Naive thymus-derived CD4-positive, alpha-beta T cell (primary cell): ENCODE measurements at regions of chr17 and their contacts with region 1.

Region 1: DNA sequence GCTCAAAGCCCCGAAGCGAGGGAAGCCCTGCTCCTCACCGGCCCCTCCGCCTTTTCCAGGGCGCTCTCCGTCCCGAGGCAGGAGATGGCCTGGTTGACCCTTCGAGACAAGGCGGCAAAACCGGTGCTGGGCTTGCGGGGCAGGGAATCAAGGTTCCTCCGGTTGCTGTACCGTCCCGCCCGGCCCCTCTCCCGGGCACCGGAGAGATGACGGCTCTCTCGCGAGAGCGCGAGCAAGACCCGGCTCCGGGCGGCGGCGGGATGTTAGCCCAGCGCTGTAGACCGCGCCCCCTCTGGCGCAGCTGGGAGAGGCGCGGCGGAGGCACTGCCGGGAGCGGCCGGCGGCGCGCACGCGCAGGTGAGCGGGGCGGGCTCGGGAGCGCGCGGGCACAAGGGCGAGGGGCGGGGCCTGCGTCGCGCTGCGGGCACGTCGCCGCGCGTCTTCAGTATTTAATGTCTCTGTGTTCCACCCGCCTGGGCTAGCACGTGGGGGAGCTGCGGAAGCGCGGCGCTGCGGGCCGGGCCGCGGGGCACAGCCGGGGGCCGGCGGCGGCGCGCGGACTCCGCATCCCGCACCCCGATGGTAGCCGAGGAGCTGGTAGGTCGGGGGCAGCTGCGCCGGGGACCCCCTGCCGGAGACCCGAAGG is at the start of gene AKAP1:
- DNase-seq: peak; percentile 91 to 98 (median 97)
- ATAC-seq: peak; percentile 95
- H3K4me3 ChIP-seq: peak within 1 kb of the TSS; percentile 96
- H3K4me3 Mint-ChIP-seq: peak within 1 kb of the TSS; percentile 89 to 95 (median 92)
- H3K27ac ChIP-seq: peak within 1 kb of the TSS; percentile 91
- H3K27ac Mint-ChIP-seq: peak within 1 kb of the TSS; percentile 86 to 95 (median 93)
- H3K4me1 ChIP-seq: peaks cover 9 to 12% of the 10 kb centered on the region in 2 donors
- H3K4me1 Mint-ChIP-seq: peaks cover 27 to 43% (median 34%) of the 10 kb centered on the region in 7 donors
- H3K27me3 ChIP-seq: no peaks in the 10 kb centered on the region
- H3K27me3 Mint-ChIP-seq: peaks cover 0 to 12% (median 0%) of the 10 kb centered on the region in 5 donors
- total RNA-seq, gene AKAP1: 22.2 to 35.8 (median 34.3) TPM

Region 2: DNA sequence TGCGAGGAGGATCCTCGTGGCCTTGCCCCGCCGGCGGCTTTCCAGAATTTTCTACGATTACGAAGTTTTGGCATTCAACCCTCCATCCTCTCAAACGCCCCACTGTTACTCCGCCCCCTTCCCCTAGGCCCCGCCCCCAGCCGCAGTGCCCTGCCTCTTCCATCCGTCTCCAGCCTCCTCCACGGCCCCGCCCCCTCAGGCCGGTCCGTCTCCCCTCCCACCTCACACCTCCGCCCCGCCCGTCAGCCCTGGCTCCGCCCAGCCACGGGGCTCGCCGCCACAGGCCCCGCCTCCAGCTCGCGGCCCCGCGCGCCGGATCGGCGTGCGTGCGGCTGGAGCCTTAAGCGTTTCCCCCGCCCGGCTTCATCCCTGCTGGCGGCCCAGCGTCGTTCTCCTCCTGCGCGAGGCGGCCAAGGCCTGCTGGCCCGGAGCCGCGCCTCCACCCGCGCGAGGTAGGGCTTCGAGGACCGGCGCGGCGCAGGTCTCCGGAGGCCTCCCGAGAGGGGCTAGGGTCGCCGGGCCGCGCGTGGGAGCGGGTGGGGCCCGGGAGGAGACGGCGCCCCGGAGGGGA is 251.0 kb before region 1 on chr17 and contains the starts of genes C17orf67 and DGKE:
- CTCF ChIA-PET with region 1: no interaction called
- POLR2A ChIA-PET with region 1: no interaction called
- intact Hi-C with region 1: loop called (anchors 1 kb)
- DNase-seq: peak; percentile 95 to 100 (median 98)
- ATAC-seq: peak; percentile 97
- H3K4me3 ChIP-seq: peak within 1 kb of the TSS; percentile 91
- H3K4me3 Mint-ChIP-seq: peak within 1 kb of the TSS; percentile 91 to 98 (median 95)
- H3K27ac ChIP-seq: peak within 1 kb of the TSS; percentile 85
- H3K27ac Mint-ChIP-seq: peak within 1 kb of the TSS; percentile 83 to 95 (median 93)
- H3K4me1 ChIP-seq: peaks cover 41 to 42% of the 10 kb centered on the region in 2 donors
- H3K4me1 Mint-ChIP-seq: peaks cover 34 to 74% (median 62%) of the 10 kb centered on the region in 7 donors
- H3K27me3 ChIP-seq: no peaks in the 10 kb centered on the region
- H3K27me3 Mint-ChIP-seq: no peaks in the 10 kb centered on the region
- total RNA-seq, gene C17orf67: 3.6 to 9.1 (median 5.4) TPM
- total RNA-seq, gene DGKE: 23.7 to 39.2 (median 35.6) TPM

Region 3: GRCh38 chr17:56977673-56978395 is 107.1 kb before region 1 on chr17 and contains the start of gene SCPEP1:
- CTCF ChIA-PET with region 1: no interaction called
- POLR2A ChIA-PET with region 1: no interaction called
- intact Hi-C with region 1: loop called (anchors 1 kb)
- DNase-seq: peak; percentile 65 to 82 (median 76)
- ATAC-seq: peak; percentile 99
- H3K4me3 ChIP-seq: peak within 1 kb of the TSS; percentile 92
- H3K4me3 Mint-ChIP-seq: peak within 1 kb of the TSS; percentile 85 to 96 (median 93)
- H3K27ac ChIP-seq: peak within 1 kb of the TSS; percentile 63
- H3K27ac Mint-ChIP-seq: peak within 1 kb of the TSS; percentile 70 to 98 (median 86)
- H3K4me1 ChIP-seq: peaks cover 10 to 12% of the 10 kb centered on the region in 2 donors
- H3K4me1 Mint-ChIP-seq: peaks cover 11 to 33% (median 24%) of the 10 kb centered on the region in 7 donors
- H3K27me3 ChIP-seq: no peaks in the 10 kb centered on the region
- H3K27me3 Mint-ChIP-seq: peaks cover 0 to 32% (median 0%) of the 10 kb centered on the region in 5 donors
- total RNA-seq, gene SCPEP1: 8.4 to 81.6 (median 27.1) TPM

Region 4: GRCh38 chr17:58006924-58007780 is 922.2 kb after region 1 on chr17 and contains the start of gene SRSF1:
- CTCF ChIA-PET with region 1: no interaction called
- POLR2A ChIA-PET with region 1: interaction called, 3 read pairs
- intact Hi-C with region 1: loop called (anchors 1 kb)
- DNase-seq: peak; percentile 95 to 99 (median 98)
- ATAC-seq: peak; percentile 92
- H3K4me3 ChIP-seq: peak within 1 kb of the TSS; percentile 99
- H3K4me3 Mint-ChIP-seq: peak within 1 kb of the TSS; percentile 96 to 100 (median 99)
- H3K27ac ChIP-seq: peak within 1 kb of the TSS; percentile 93
- H3K27ac Mint-ChIP-seq: peak within 1 kb of the TSS; percentile 99 to 100 (median 99)
- H3K4me1 ChIP-seq: peaks cover 31 to 32% of the 10 kb centered on the region in 2 donors
- H3K4me1 Mint-ChIP-seq: peaks cover 33 to 60% (median 54%) of the 10 kb centered on the region in 7 donors
- H3K27me3 ChIP-seq: no peaks in the 10 kb centered on the region
- H3K27me3 Mint-ChIP-seq: peaks cover 0 to 3% (median 0%) of the 10 kb centered on the region in 5 donors
- total RNA-seq, gene SRSF1: 115 to 362 (median 249) TPM

Region 5: DNA sequence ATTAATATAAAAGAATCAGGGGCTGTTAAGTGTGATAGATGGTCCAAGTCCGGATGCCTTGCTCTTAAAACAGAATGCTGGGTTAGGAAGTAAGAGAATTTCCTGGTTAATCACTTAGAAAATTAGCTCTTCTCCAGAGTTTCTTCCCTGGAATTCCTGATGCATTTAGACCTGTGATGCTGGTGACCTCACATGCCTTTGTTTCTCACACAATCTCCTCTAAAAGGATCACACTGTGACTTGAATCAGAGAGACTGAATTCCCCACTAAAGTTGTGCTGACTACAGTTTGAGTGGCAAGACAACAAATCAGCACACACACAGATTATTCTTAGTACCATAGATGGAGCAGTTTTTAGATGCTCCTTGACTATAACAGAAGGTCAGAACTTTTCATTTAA is 1336.8 kb after region 1 on chr17:
- CTCF ChIA-PET with region 1: no interaction called
- POLR2A ChIA-PET with region 1: no interaction called
- intact Hi-C with region 1: no loop called
- DNase-seq: no peak
- ATAC-seq: no peak
- H3K4me3 ChIP-seq: no peak overlapping the region
- H3K4me3 Mint-ChIP-seq: no peak overlapping the region
- H3K27ac ChIP-seq: no peak overlapping the region
- H3K27ac Mint-ChIP-seq: no peak overlapping the region
- H3K4me1 ChIP-seq: peaks cover 0 to 9% of the 10 kb centered on the region in 2 donors
- H3K4me1 Mint-ChIP-seq: peaks cover 7 to 17% (median 14%) of the 10 kb centered on the region in 7 donors
- H3K27me3 ChIP-seq: no peaks in the 10 kb centered on the region
- H3K27me3 Mint-ChIP-seq: no peaks in the 10 kb centered on the region

Region 6: GRCh38 chr17:58487589-58488427 is 1402.9 kb after region 1 on chr17 and contains the start of gene HSF5:
- CTCF ChIA-PET with region 1: no interaction called
- POLR2A ChIA-PET with region 1: no interaction called
- intact Hi-C with region 1: loop called in 1 of 2 experiments (anchors 2 kb)
- DNase-seq: peak; percentile 60 to 85 (median 82)
- ATAC-seq: peak; percentile 94
- H3K4me3 ChIP-seq: peak within 1 kb of the TSS; percentile 60
- H3K4me3 Mint-ChIP-seq: peak within 1 kb of the TSS; percentile 50 to 79 (median 69)
- H3K27ac ChIP-seq: peak within 1 kb of the TSS; percentile 60
- H3K27ac Mint-ChIP-seq: peak within 1 kb of the TSS in 7 of 9 donors; percentile 45 to 83 (median 57)
- H3K4me1 ChIP-seq: peaks cover 5 to 10% of the 10 kb centered on the region in 2 donors
- H3K4me1 Mint-ChIP-seq: peaks cover 0 to 35% (median 16%) of the 10 kb centered on the region in 7 donors
- H3K27me3 ChIP-seq: no peaks in the 10 kb centered on the region
- H3K27me3 Mint-ChIP-seq: no peaks in the 10 kb centered on the region
- total RNA-seq, gene HSF5: 0.34 to 4.0 (median 3.1) TPM